Panc1 (cell line): ENCODE measurements at regions of chr6 and their contacts with region 1.

Region 1: GRCh38 chr6:17349427-17349826 is 44.0 kb upstream of the CAP2 start:
- DNase-seq: no peak
- ATAC-seq: peak; percentile 48
- H3K4me3 ChIP-seq: no peak overlapping the region
- H3K27ac ChIP-seq: no peak overlapping the region
- H3K4me1 ChIP-seq: 0 out of 2 replicates have a peak, but pooled peaks cover under 1% of the 10 kb centered on the region
- H3K27me3 ChIP-seq: no peaks in the 10 kb centered on the region
- CTCF ChIP-seq: no peak

Region 2: GRCh38 chr6:17484201-17484849 is 134.9 kb after region 1 on chr6:
- CTCF ChIA-PET with region 1: no interaction called
- POLR2A ChIA-PET with region 1: interaction called, 16 read pairs
- in situ Hi-C with region 1: no loop called
- intact Hi-C with region 1: no loop called
- DNase-seq: no peak
- ATAC-seq: no peak
- H3K4me3 ChIP-seq: no peak overlapping the region
- H3K27ac ChIP-seq: no peak overlapping the region
- H3K4me1 ChIP-seq: no peaks in the 10 kb centered on the region
- H3K27me3 ChIP-seq: no peaks in the 10 kb centered on the region
- CTCF ChIP-seq: no peak